ENCODE measurements at regions of chr5 and their contacts with region 1.

Region 1: GRCh38 chr5:134825212-134825611 is 20.6 kb upstream of the C5orf24 start:
- DNase-seq: no peak
- H3K4me3 ChIP-seq: no peak overlapping the region
- CTCF ChIP-seq: no peak
- POLR2A ChIP-seq: no peak

Region 2: DNA sequence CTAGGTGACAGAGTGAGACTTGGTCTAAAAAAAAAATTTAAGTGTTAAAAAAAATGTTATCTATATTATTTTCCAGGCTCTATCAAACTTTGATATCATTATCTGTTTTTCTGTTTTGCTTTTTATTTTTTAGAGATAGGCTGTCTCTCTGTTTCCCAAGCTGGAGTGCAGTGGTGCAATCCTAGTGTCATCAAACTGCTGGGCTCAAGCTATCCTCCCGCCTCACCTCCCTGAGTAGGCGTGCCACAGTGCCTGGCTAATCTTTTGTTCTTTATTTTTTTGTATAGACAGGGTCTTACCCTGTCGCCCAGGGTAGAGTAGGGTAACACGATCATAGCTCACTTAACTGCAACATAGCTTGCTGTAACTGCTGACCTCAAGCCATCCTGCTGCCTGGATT is 162.2 kb before region 1 on chr5:
- intact Hi-C with region 1: loop called (anchors 10 kb)
- DNase-seq: peak in 1 of 2 donors; percentile 31
- H3K4me3 ChIP-seq: no peak overlapping the region
- CTCF ChIP-seq: no peak
- POLR2A ChIP-seq: no peak

Measured in lower leg skin (tissue), 4 donors.